Sigmoid colon (tissue), 7 donors: ENCODE measurements at regions of chr12 and their contacts with region 1.

Region 1: GRCh38 chr12:8026291-8026900 is 6.1 kb upstream of the FOXJ2 start:
- DNase-seq: peak; percentile 99
- H3K4me3 ChIP-seq: peak overlapping the region; percentile 60 to 92 (median 74)
- H3K27ac ChIP-seq: peak overlapping the region; percentile 98 to 100 (median 100)
- H3K4me1 ChIP-seq: peaks cover 0 to 9% (median 4%) of the 10 kb centered on the region in 4 donors
- H3K27me3 ChIP-seq: no peaks in the 10 kb centered on the region
- CTCF ChIP-seq: no peak
- EP300 ChIP-seq: no peak
- POLR2A ChIP-seq: no peak

Region 2: GRCh38 chr12:7716381-7716780 is 310.0 kb before region 1 on chr12:
- intact Hi-C with region 1: no loop called
- DNase-seq: no peak
- H3K4me3 ChIP-seq: no peak overlapping the region
- H3K27ac ChIP-seq: no peak overlapping the region
- H3K4me1 ChIP-seq: no peaks in the 10 kb centered on the region
- H3K27me3 ChIP-seq: no peaks in the 10 kb centered on the region
- CTCF ChIP-seq: no peak
- EP300 ChIP-seq: no peak
- POLR2A ChIP-seq: no peak

Region 3: DNA sequence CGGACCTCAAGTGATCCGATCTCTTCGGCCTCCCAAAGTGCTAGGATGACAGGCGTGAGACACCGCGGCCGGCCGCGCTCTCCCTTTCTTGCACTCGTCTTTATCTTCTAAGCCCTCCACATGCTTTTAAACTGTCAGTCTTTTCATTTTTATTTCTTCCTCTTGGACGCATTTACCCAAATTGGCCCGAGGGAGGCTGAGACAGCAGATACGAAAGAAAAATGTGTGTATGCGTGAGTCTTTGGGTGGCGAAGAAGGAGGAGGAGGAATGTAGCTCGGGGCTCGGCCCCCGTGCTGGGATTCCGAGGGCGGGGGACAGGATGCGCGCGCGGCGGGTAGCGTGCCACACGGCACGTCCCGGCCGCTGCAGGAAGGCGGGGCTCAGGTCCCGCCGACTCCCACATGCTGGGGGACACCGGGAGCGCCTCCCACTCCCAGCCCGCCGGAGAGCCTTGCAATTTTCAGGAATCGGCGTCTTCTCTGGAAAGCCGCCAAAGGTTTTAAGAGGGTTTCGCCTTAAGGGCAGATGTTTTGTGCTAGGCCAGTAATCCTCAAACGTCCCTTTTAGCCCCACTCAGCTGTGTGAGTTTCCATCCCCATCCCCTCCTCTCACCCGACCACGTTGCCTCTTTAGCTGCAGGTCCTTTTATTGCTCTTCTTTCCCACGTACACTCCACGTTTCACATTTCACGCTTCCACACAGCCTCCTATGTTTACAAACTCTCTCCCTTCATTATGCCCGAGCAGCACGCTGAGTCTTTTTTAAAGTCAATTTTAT is 55.7 kb before region 1 on chr12:
- intact Hi-C with region 1: loop called (anchors 5 kb)
- DNase-seq: peak; percentile 93
- H3K4me3 ChIP-seq: peak overlapping the region; percentile 36 to 59 (median 48)
- H3K27ac ChIP-seq: peak overlapping the region; percentile 72 to 89 (median 82)
- H3K4me1 ChIP-seq: peaks cover 0 to 17% (median 11%) of the 10 kb centered on the region in 4 donors
- H3K27me3 ChIP-seq: no peaks in the 10 kb centered on the region
- CTCF ChIP-seq: no peak
- EP300 ChIP-seq: peak in 3 of 4 donors; percentile 5 to 62 (median 61)
- POLR2A ChIP-seq: peak in 1 of 2 donors; percentile 14